Activated naive CD4-positive, alpha-beta T cell treated with anti-CD3 and anti-CD28 coated beads, Interleukin-2, amount 10 ng/mL, durations not matched to agents 7 days and 5 days (primary cell): ENCODE measurements at regions of chr10 and their contacts with region 1.

Region 1: GRCh38 chr10:100743626-100744135 is 1.7 kb upstream of the PAX2 start:
- DNase-seq: peak; percentile 65
- H3K4me3 Mint-ChIP-seq: no peak overlapping the region
- H3K27ac Mint-ChIP-seq: peak overlapping the region; percentile 58
- H3K4me1 Mint-ChIP-seq: peaks cover 23% of the 10 kb centered on the region
- H3K27me3 Mint-ChIP-seq: peaks cover 100% of the 10 kb centered on the region

Region 2: DNA sequence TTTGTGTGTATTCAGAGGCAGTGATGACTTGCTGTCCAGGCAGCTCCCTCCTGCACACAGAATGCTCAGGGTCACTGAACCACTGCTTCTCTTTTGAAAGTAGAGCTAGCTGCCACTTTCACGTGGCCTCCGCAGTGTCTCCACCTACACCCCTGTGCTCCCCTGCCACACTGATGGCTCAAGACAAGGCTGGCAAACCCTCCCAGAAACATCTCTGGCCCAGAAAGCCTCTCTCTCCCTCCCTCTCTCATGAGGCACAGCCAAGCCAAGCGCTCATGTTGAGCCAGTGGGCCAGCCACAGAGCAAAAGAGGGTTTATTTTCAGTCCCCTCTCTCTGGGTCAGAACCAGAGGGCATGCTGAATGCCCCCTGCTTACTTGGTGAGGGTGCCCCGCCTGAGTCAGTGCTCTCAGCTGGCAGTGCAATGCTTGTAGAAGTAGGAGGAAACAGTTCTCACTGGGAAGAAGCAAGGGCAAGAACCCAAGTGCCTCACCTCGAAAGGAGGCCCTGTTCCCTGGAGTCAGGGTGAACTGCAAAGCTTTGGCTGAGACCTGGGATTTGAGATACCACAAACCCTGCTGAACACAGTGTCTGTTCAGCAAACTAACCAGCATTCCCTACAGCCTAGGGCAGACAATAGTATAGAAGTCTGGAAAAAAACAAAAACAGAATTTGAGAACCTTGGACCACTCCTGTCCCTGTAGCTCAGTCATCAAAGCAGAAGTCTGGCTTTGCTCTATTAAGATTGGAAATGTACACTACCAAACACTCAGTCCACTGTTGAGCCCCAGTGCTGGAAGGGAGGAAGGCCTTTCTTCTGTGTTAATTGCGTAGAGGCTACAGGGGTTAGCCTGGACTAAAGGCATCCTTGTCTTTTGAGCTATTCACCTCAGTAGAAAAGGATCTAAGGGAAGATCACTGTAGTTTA is 380.8 kb before region 1 on chr10:
- CTCF ChIA-PET with region 1: no interaction called
- DNase-seq: no peak
- H3K4me3 Mint-ChIP-seq: no peak overlapping the region
- H3K27ac Mint-ChIP-seq: peak overlapping the region; percentile 63
- H3K4me1 Mint-ChIP-seq: peaks cover 44% of the 10 kb centered on the region
- H3K27me3 Mint-ChIP-seq: no peaks in the 10 kb centered on the region

Region 3: DNA sequence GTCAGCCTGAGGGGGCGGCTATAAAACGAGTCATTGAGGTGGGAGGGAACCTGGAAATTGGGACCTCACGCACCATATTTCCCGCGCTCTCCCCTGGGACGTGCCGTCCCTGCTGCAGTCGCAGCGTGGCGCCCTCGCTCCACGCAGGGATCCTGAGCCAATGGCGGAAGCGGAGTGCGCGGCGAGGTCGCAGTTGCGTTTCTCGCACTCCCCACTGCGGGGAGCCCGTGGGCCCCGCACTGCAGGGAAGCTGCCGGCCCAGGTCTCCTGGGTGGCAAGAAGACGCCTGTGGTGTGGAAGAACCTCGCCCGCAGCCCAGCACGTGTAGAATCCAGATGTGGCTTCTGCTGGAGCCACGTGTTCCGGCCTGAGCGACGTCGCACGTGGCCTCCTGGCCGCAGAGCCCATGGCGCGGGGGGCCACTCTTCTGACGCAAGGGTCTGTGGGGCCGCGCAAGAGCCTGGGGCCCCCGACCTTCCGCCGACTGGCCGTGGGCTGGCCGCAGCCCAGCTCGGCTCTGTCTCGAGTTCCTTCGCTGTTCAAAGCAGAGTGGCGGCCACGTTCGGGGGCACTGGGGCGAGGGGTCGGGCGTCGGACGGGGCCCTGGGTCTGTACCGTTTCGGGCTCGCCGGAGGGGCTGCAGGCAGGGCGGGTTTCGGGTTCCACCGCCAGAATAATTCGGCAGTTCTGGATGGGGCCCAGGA is 181.5 kb before region 1 on chr10:
- CTCF ChIA-PET with region 1: interaction called, 31 read pairs
- DNase-seq: peak; percentile 86
- H3K4me3 Mint-ChIP-seq: no peak overlapping the region
- H3K27ac Mint-ChIP-seq: no peak overlapping the region
- H3K4me1 Mint-ChIP-seq: peaks cover 19% of the 10 kb centered on the region
- H3K27me3 Mint-ChIP-seq: peaks cover 49% of the 10 kb centered on the region

Region 4: GRCh38 chr10:100670828-100671479 is 72.7 kb before region 1 on chr10:
- CTCF ChIA-PET with region 1: interaction called, 14 read pairs
- DNase-seq: peak; percentile 71
- H3K4me3 Mint-ChIP-seq: no peak overlapping the region
- H3K27ac Mint-ChIP-seq: no peak overlapping the region
- H3K4me1 Mint-ChIP-seq: peaks cover 7% of the 10 kb centered on the region
- H3K27me3 Mint-ChIP-seq: peaks cover 73% of the 10 kb centered on the region